ENCODE measurements at regions of chr6 and their contacts with region 1.

Region 1: DNA sequence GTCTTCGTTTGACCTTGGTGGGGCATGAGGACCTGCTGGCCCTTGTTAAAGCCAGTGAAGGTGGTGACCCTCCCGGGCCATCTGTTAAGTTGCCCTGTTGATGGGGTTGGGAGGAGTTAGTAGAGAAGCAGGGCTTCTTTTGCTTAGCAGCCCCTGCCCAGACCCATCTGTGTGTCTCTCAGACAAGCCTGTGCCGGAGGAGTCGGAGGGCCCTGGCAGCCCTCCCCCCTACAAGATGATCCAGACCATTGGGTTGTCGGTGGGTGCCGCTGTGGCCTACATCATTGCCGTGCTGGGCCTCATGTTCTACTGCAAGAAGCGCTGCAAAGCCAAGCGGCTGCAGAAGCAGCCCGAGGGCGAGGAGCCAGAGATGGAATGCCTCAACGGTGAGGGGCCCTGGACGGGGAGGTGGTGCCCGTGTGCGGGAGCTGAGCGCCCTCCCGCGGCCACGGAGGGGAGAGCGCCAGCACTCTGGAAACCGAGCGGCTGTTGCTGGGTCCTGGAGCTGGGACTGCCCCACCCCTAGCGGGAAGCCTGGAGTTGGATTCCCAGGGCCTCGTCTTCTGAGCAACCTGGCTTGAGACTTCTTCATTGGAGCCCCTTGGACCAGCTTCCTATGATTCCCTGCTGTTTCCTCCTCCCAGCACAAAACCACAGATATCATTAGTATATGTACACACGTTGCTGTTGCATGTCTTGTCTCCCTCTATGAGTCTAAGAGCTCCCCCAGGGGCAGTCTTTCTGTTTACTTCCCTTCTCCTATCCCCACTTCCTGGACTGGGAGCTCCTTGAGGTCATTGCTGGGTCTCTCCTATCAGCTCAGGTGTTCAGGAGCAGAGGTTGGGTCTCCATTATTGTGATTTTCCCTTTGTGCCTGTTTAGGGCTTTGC is 27.6 kb upstream of the SRF start:
- DNase-seq: no peak
- ATAC-seq: peak; percentile 96
- H3K4me3 ChIP-seq: no peak overlapping the region
- H3K27ac ChIP-seq: no peak overlapping the region
- H3K4me1 ChIP-seq: no peaks in the 10 kb centered on the region
- H3K27me3 ChIP-seq: no peaks in the 10 kb centered on the region; a peak in 1 of 4 replicates
- CTCF ChIP-seq: peak; percentile 85 to 97 (median 93); a peak in 5 of 6 replicates
- EP300 ChIP-seq: no peak
- POLR2A ChIP-seq: no peak
- RAD21 ChIP-seq: peak; percentile 90

Region 2: DNA sequence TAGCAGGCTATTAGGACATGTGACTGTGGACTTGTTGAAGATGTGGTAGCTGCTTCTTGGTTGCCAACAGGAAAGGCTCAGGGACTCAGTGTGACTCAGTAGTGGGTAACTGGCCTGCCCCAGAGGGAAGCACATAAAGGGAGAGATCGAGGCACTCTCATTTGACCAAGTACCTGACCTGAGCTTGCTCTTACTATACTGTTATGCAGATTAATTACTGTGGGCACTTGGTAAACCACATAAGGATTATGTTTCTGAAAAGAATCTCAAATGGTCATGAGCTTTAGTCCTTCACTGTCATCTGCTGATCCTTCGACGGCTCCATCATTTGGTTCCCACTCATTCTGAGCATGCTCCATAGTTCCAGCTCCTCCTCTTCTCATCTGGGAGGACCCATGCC is 312.2 kb before region 1 on chr6:
- CTCF ChIA-PET with region 1: no interaction called
- POLR2A ChIA-PET with region 1: no interaction called
- RAD21 ChIA-PET with region 1: no interaction called
- SMC1A ChIA-PET with region 1: no interaction called
- in situ Hi-C with region 1: no loop called
- intact Hi-C with region 1: no loop called
- DNase-seq: no peak
- ATAC-seq: no peak
- H3K4me3 ChIP-seq: no peak overlapping the region
- H3K27ac ChIP-seq: no peak overlapping the region
- H3K4me1 ChIP-seq: no peaks in the 10 kb centered on the region
- H3K27me3 ChIP-seq: no peaks in the 10 kb centered on the region
- CTCF ChIP-seq: no peak
- EP300 ChIP-seq: no peak
- POLR2A ChIP-seq: no peak
- RAD21 ChIP-seq: no peak

Region 3: GRCh38 chr6:42907336-42907735 is 236.1 kb before region 1 on chr6:
- CTCF ChIA-PET with region 1: interaction called, 28 read pairs
- POLR2A ChIA-PET with region 1: interaction called, 6 read pairs
- RAD21 ChIA-PET with region 1: interaction called, 5 read pairs
- SMC1A ChIA-PET with region 1: interaction called, 19 read pairs
- in situ Hi-C with region 1: loop called (anchors 5 kb)
- intact Hi-C with region 1: no loop called
- DNase-seq: no peak
- ATAC-seq: no peak
- H3K4me3 ChIP-seq: no peak overlapping the region
- H3K27ac ChIP-seq: no peak overlapping the region
- H3K4me1 ChIP-seq: no peaks in the 10 kb centered on the region
- H3K27me3 ChIP-seq: no peaks in the 10 kb centered on the region
- CTCF ChIP-seq: no peak
- EP300 ChIP-seq: no peak
- POLR2A ChIP-seq: no peak
- RAD21 ChIP-seq: no peak

Region 4: GRCh38 chr6:42963855-42964605 is 179.4 kb before region 1 on chr6:
- CTCF ChIA-PET with region 1: interaction called, 15 read pairs
- POLR2A ChIA-PET with region 1: no interaction called
- RAD21 ChIA-PET with region 1: interaction called, 12 read pairs
- SMC1A ChIA-PET with region 1: interaction called, 3 read pairs
- in situ Hi-C with region 1: no loop called
- intact Hi-C with region 1: no loop called
- DNase-seq: no peak
- ATAC-seq: peak; percentile 88
- H3K4me3 ChIP-seq: no peak overlapping the region
- H3K27ac ChIP-seq: no peak overlapping the region
- H3K4me1 ChIP-seq: no peaks in the 10 kb centered on the region
- H3K27me3 ChIP-seq: no peaks in the 10 kb centered on the region
- CTCF ChIP-seq: peak in 2 of 3 experiments; percentile 42 to 44; a peak in 4 of 6 replicates
- EP300 ChIP-seq: no peak
- POLR2A ChIP-seq: no peak
- RAD21 ChIP-seq: peak; percentile 46

Region 5: GRCh38 chr6:43013843-43014433 is 129.5 kb before region 1 on chr6 and contains the starts of genes KLHDC3 and MEA1:
- CTCF ChIA-PET with region 1: interaction called, 26 read pairs
- POLR2A ChIA-PET with region 1: interaction called, 3 read pairs
- RAD21 ChIA-PET with region 1: interaction called, 8 read pairs
- SMC1A ChIA-PET with region 1: interaction called, 4 read pairs
- in situ Hi-C with region 1: no loop called
- intact Hi-C with region 1: loop called (anchors 1 kb)
- DNase-seq: peak; percentile 100
- ATAC-seq: peak; percentile 96
- H3K4me3 ChIP-seq: peak within 1 kb of the TSS; percentile 85
- H3K27ac ChIP-seq: peak within 1 kb of the TSS; percentile 60
- H3K4me1 ChIP-seq: peaks cover 7% of the 10 kb centered on the region
- H3K27me3 ChIP-seq: no peaks in the 10 kb centered on the region
- CTCF ChIP-seq: no peak
- EP300 ChIP-seq: no peak
- POLR2A ChIP-seq: peak; percentile 82
- RAD21 ChIP-seq: no peak
- polyA plus RNA-seq, gene KLHDC3: 2.4 to 8.9 TPM
- polyA plus RNA-seq, gene MEA1: 90.7 to 105 TPM

Region 6: GRCh38 chr6:43059168-43060033 is 84.1 kb before region 1 on chr6 and contains the starts of genes KLC4 and MRPL2:
- CTCF ChIA-PET with region 1: interaction called, 4 read pairs
- POLR2A ChIA-PET with region 1: no interaction called
- RAD21 ChIA-PET with region 1: interaction called, 16 read pairs
- SMC1A ChIA-PET with region 1: interaction called, 6 read pairs
- in situ Hi-C with region 1: no loop called
- intact Hi-C with region 1: no loop called
- DNase-seq: peak; percentile 97
- ATAC-seq: peak; percentile 98
- H3K4me3 ChIP-seq: peak within 1 kb of the TSS; percentile 95
- H3K27ac ChIP-seq: peak within 1 kb of the TSS; percentile 87
- H3K4me1 ChIP-seq: peaks cover 3% of the 10 kb centered on the region; the same call in 1 of the 2 replicates
- H3K27me3 ChIP-seq: no peaks in the 10 kb centered on the region
- CTCF ChIP-seq: no peak
- EP300 ChIP-seq: no peak
- POLR2A ChIP-seq: peak; percentile 94
- RAD21 ChIP-seq: no peak
- polyA plus RNA-seq, gene KLC4: 0.90 to 2.4 TPM
- polyA plus RNA-seq, gene MRPL2: 29.7 to 42.1 TPM

Region 7: GRCh38 chr6:43070028-43070632 is 73.3 kb before region 1 on chr6:
- CTCF ChIA-PET with region 1: interaction called, 16 read pairs
- POLR2A ChIA-PET with region 1: interaction called, 3 read pairs
- RAD21 ChIA-PET with region 1: interaction called, 5 read pairs
- SMC1A ChIA-PET with region 1: interaction called, 11 read pairs
- in situ Hi-C with region 1: no loop called
- intact Hi-C with region 1: loop called (anchors 1 kb)
- DNase-seq: no peak
- ATAC-seq: peak; percentile 95
- H3K4me3 ChIP-seq: no peak overlapping the region
- H3K27ac ChIP-seq: no peak overlapping the region
- H3K4me1 ChIP-seq: no peaks in the 10 kb centered on the region
- H3K27me3 ChIP-seq: no peaks in the 10 kb centered on the region; a peak in 1 of 4 replicates
- CTCF ChIP-seq: peak; percentile 37 to 61 (median 56); a peak in 5 of 6 replicates
- EP300 ChIP-seq: no peak
- POLR2A ChIP-seq: no peak
- RAD21 ChIP-seq: peak; percentile 78

Region 8: DNA sequence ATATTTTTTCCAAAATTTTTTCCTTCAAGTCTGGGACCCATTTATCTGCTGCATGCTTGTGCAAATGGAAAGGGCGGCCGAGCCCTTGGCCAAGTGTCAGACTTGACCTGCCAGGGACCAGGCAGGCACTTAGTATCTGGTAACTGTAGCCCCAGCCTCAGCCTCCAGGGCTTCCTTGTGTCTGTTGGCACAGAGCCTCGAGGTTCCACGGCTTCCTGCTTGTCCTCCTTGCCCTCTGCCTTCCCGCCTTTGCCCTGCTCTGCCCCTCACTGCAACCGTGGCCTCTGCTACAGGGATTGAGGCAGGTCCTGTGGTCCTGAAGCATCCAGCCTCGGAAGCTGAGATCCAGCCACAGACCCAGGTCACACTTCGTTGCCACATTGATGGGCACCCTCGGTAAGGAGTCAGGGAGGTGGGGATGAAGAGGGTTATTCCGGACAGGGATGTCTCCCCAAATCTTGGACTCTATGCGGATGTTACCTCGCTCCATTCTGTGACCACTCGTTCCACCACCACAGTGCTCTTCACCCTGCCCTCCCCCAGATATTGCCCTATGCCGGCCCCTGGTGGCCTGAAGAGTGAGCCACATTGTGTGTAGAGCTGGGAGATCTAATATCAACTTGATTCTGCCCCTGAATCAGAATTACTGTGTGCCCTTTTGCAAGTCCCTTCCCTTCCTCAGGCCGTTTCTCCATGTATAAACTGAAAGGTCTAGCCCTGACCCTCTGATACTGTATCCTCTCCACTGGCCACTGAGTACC is 13.9 kb before region 1 on chr6:
- CTCF ChIA-PET with region 1: interaction called, 13 read pairs
- POLR2A ChIA-PET with region 1: no interaction called
- RAD21 ChIA-PET with region 1: interaction called, 4 read pairs
- SMC1A ChIA-PET with region 1: interaction called, 5 read pairs
- in situ Hi-C with region 1: no loop called
- intact Hi-C with region 1: no loop called
- DNase-seq: no peak
- ATAC-seq: peak; percentile 91
- H3K4me3 ChIP-seq: no peak overlapping the region
- H3K27ac ChIP-seq: no peak overlapping the region
- H3K4me1 ChIP-seq: no peaks in the 10 kb centered on the region
- H3K27me3 ChIP-seq: peaks cover 0 to 1% of the 10 kb centered on the region in 2 experiments; a peak in 1 of 4 replicates
- CTCF ChIP-seq: peak; percentile 54 to 70 (median 64); a peak in 5 of 6 replicates
- EP300 ChIP-seq: no peak
- POLR2A ChIP-seq: no peak
- RAD21 ChIP-seq: peak; percentile 82

Region 9: DNA sequence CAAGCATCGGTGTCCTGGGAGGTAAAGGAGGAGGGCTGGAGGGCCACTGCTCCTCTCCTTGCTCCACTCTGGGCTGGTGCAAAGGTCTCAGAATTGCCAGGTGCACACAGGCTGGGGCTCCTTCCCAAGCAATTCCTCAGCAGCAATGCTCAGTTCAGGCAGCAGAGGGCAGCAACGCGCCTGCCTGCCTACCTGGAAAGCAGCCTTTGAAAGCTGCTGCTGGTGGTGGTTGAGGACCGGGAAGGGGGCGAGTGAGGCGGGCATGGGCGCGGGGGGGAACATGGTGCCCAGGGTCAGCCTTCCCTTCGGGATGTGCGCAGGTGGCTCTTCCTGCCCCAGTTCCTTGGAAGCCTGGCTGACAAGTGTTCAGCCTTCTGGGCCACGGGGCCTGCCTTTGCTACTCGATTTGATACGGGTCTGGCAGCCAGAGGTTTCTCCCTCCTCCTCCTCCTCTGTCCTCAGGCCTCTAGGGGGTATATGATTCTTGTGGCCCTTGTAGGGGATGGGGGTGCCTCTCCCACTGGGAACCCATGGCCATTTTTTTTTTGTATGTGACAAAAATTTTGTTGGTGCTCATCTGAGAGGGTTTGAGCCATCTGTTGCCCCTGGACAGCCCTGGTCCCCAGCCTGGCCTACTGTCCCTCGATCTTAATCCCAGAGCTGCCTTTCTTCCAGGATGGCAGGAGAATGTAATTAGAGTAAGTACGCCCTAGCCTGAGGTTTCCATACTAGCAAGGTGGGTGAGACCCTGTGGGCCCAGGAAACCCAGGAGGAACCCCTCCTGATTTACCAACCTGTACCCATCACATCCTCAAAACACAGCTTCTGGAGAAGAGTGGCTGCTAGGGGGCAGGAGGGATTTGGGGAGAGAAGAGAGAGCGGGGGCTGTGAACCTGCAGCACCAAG is 524.0 kb after region 1 on chr6:
- CTCF ChIA-PET with region 1: no interaction called
- POLR2A ChIA-PET with region 1: no interaction called
- RAD21 ChIA-PET with region 1: no interaction called
- SMC1A ChIA-PET with region 1: no interaction called
- in situ Hi-C with region 1: no loop called
- intact Hi-C with region 1: no loop called
- DNase-seq: no peak
- ATAC-seq: peak; percentile 84
- H3K4me3 ChIP-seq: no peak overlapping the region
- H3K27ac ChIP-seq: peak overlapping the region; percentile 69
- H3K4me1 ChIP-seq: peaks cover 38% of the 10 kb centered on the region
- H3K27me3 ChIP-seq: no peaks in the 10 kb centered on the region
- CTCF ChIP-seq: peak; percentile 95 to 99 (median 95)
- EP300 ChIP-seq: no peak
- POLR2A ChIP-seq: peak; percentile 70
- RAD21 ChIP-seq: peak; percentile 92

Measured in GM12878 (cell line).